ENCODE measurements at regions of chr22 and their contacts with region 1.

Region 1: GRCh38 chr22:31272522-31273446 is 19.5 kb downstream of the PIK3IP1 start:
- DNase-seq: peak; percentile 67
- H3K4me3 ChIP-seq: no peak overlapping the region
- H3K27ac ChIP-seq: no peak overlapping the region
- H3K4me1 ChIP-seq: no peaks in the 10 kb centered on the region
- H3K27me3 ChIP-seq: no peaks in the 10 kb centered on the region
- CTCF ChIP-seq: peak; percentile 66 to 69
- POLR2A ChIP-seq: no peak

Region 2: GRCh38 chr22:31036671-31037550 is 235.9 kb before region 1 on chr22:
- CTCF ChIA-PET with region 1: no interaction called
- POLR2A ChIA-PET with region 1: no interaction called
- dilution Hi-C with region 1: no loop called
- intact Hi-C with region 1: no loop called
- DNase-seq: no peak
- H3K4me3 ChIP-seq: no peak overlapping the region
- H3K27ac ChIP-seq: no peak overlapping the region
- H3K4me1 ChIP-seq: no peaks in the 10 kb centered on the region
- H3K27me3 ChIP-seq: peaks cover 0 to 5% of the 10 kb centered on the region in 2 experiments
- CTCF ChIP-seq: no peak
- POLR2A ChIP-seq: no peak

Region 3: GRCh38 chr22:31080848-31081649 is 191.7 kb before region 1 on chr22 and contains the start of gene SMTN:
- CTCF ChIA-PET with region 1: interaction called, 11 read pairs
- POLR2A ChIA-PET with region 1: no interaction called
- dilution Hi-C with region 1: no loop called
- intact Hi-C with region 1: no loop called
- DNase-seq: peak; percentile 96
- H3K4me3 ChIP-seq: peak within 1 kb of the TSS; percentile 47 to 85 (median 65)
- H3K27ac ChIP-seq: peak within 1 kb of the TSS; percentile 96
- H3K4me1 ChIP-seq: peaks cover 33% of the 10 kb centered on the region
- H3K27me3 ChIP-seq: no peaks in the 10 kb centered on the region
- CTCF ChIP-seq: no peak
- POLR2A ChIP-seq: peak; percentile 97
- total RNA-seq, gene SMTN: 197 and 201 TPM in 2 replicates

Region 4: GRCh38 chr22:31199183-31199582 is 73.6 kb before region 1 on chr22:
- CTCF ChIA-PET with region 1: interaction called, 22 read pairs
- POLR2A ChIA-PET with region 1: no interaction called
- dilution Hi-C with region 1: no loop called
- intact Hi-C with region 1: loop called (anchors 5 kb)
- DNase-seq: no peak
- H3K4me3 ChIP-seq: no peak overlapping the region
- H3K27ac ChIP-seq: no peak overlapping the region
- H3K4me1 ChIP-seq: no peaks in the 10 kb centered on the region
- H3K27me3 ChIP-seq: no peaks in the 10 kb centered on the region
- CTCF ChIP-seq: peak; percentile 26 to 31
- POLR2A ChIP-seq: no peak

Region 5: GRCh38 chr22:31218565-31219262 is 54.1 kb before region 1 on chr22:
- CTCF ChIA-PET with region 1: interaction called, 66 read pairs
- POLR2A ChIA-PET with region 1: no interaction called
- dilution Hi-C with region 1: no loop called
- intact Hi-C with region 1: no loop called
- DNase-seq: no peak
- H3K4me3 ChIP-seq: no peak overlapping the region
- H3K27ac ChIP-seq: peak overlapping the region; percentile 94
- H3K4me1 ChIP-seq: peaks cover 51% of the 10 kb centered on the region
- H3K27me3 ChIP-seq: no peaks in the 10 kb centered on the region
- CTCF ChIP-seq: no peak
- POLR2A ChIP-seq: no peak

Region 6: GRCh38 chr22:31253949-31254348 is 18.8 kb before region 1 on chr22:
- CTCF ChIA-PET with region 1: interaction called, 169 read pairs
- POLR2A ChIA-PET with region 1: no interaction called
- dilution Hi-C with region 1: no loop called
- intact Hi-C with region 1: no loop called
- DNase-seq: peak; percentile 82
- H3K4me3 ChIP-seq: no peak overlapping the region
- H3K27ac ChIP-seq: peak overlapping the region; percentile 32
- H3K4me1 ChIP-seq: peaks cover 8% of the 10 kb centered on the region
- H3K27me3 ChIP-seq: no peaks in the 10 kb centered on the region
- CTCF ChIP-seq: peak in 1 of 2 donors; percentile 27
- POLR2A ChIP-seq: no peak

Region 7: GRCh38 chr22:31290494-31291471 is 18.0 kb after region 1 on chr22:
- CTCF ChIA-PET with region 1: interaction called, 33 read pairs
- POLR2A ChIA-PET with region 1: no interaction called
- dilution Hi-C with region 1: no loop called
- intact Hi-C with region 1: no loop called
- DNase-seq: peak; percentile 96
- H3K4me3 ChIP-seq: peak overlapping the region; percentile 41 to 69 (median 45)
- H3K27ac ChIP-seq: peak overlapping the region; percentile 50
- H3K4me1 ChIP-seq: peaks cover 41% of the 10 kb centered on the region
- H3K27me3 ChIP-seq: no peaks in the 10 kb centered on the region
- CTCF ChIP-seq: no peak
- POLR2A ChIP-seq: no peak